ENCODE measurements at regions of chr16 and their contacts with region 1.

Region 1: DNA sequence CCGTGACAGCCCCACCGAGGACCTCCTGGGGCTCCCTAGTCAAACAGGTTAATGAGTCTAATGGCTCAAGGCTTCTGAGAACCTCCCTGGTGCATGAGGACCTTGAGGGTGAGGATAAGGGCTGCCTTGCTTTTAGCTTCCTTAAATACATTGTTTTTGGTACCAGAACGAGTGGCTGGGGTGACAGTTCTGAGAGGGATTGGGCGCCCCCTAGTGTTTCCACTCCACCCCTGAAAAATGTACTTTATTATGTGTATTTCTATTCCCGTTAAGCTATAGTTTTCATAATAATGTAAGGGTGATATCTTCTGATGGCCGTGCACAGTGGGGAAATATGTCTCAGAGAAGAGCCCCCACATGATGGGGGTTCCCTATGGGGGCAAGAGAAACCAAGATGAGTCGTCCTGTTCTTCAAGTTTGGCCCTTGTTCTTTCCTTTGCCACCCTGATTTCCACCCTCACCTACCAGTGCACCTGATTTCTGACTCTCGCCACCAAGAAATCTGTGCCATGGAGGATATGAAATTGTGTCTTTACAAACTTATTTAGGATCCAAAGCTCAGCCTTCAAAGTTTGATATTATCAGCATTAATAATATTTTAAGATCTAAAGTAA is 14.5 kb upstream of the VWA3A start:
- DNase-seq: peak; percentile 68 to 81
- ATAC-seq: peak; percentile 59
- H3K4me3 ChIP-seq: no peak overlapping the region
- H3K27ac ChIP-seq: no peak overlapping the region
- H3K4me1 ChIP-seq: no peaks in the 10 kb centered on the region
- H3K27me3 ChIP-seq: no peaks in the 10 kb centered on the region

Region 2: GRCh38 chr16:22001591-22001990 is 76.2 kb before region 1 on chr16:
- intact Hi-C with region 1: loop called in 1 of 2 experiments (anchors 5 kb)
- DNase-seq: no peak
- ATAC-seq: no peak
- H3K4me3 ChIP-seq: no peak overlapping the region
- H3K27ac ChIP-seq: no peak overlapping the region
- H3K4me1 ChIP-seq: no peaks in the 10 kb centered on the region
- H3K27me3 ChIP-seq: no peaks in the 10 kb centered on the region

Region 3: GRCh38 chr16:22007509-22008214 is 70.1 kb before region 1 on chr16 and contains the start of gene MOSMO:
- intact Hi-C with region 1: loop called (anchors 2 to 5 kb)
- DNase-seq: peak; percentile 82 to 94
- ATAC-seq: peak; percentile 92
- H3K4me3 ChIP-seq: peak within 1 kb of the TSS; percentile 84 to 95
- H3K27ac ChIP-seq: peak within 1 kb of the TSS in 1 of 2 donors; percentile 14
- H3K4me1 ChIP-seq: no peaks in the 10 kb centered on the region
- H3K27me3 ChIP-seq: no peaks in the 10 kb centered on the region
- total RNA-seq, gene MOSMO: 17.8 to 19.6 TPM